Left ventricle myocardium superior (tissue), 1 donor: ENCODE measurements at regions of chr6 and their contacts with region 1.

Region 1: GRCh38 chr6:79078075-79079025 is at the start of gene PHIP:
- DNase-seq: peak; percentile 96
- ATAC-seq: peak; percentile 94
- total RNA-seq, gene PHIP: 17.3 TPM

Region 2: DNA sequence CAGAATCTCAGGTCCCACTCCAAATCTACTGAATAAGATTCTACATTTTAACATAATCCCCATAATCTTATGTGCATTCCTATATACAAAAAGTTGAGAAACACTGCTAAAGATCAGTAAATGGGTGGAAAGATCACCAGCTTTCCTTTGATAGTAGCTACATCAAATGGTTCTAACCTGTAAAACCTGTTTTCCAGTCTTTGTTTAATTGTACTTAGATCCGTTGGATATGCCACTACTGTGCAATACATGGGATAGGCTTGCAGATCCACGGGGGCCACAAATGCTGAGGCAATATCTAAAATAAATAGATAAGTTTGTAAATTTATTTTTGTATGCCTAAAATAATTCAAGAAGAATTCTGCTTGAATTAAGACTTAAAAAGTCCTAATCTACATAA is 116.8 kb before region 1 on chr6:
- intact Hi-C with region 1: loop called (anchors 10 kb)
- DNase-seq: no peak
- ATAC-seq: no peak

Region 3: GRCh38 chr6:79233611-79234149 is 155.3 kb after region 1 on chr6:
- intact Hi-C with region 1: loop called (anchors 10 kb)
- DNase-seq: peak; percentile 94
- ATAC-seq: peak; percentile 96

Region 4: GRCh38 chr6:79544939-79545450 is 466.6 kb after region 1 on chr6:
- intact Hi-C with region 1: loop called (anchors 5 kb)
- DNase-seq: peak; percentile 50
- ATAC-seq: peak; percentile 93